ENCODE measurements at regions of chr7 and their contacts with region 1.

Region 1: GRCh38 chr7:87716819-87717218 is 88.6 kb downstream of the RUNDC3B start:
- DNase-seq: no peak
- H3K4me3 ChIP-seq: no peak overlapping the region
- H3K27ac ChIP-seq: no peak overlapping the region
- H3K4me1 ChIP-seq: no peaks in the 10 kb centered on the region
- H3K27me3 ChIP-seq: no peaks in the 10 kb centered on the region
- CTCF ChIP-seq: no peak
- EP300 ChIP-seq: no peak
- POLR2A ChIP-seq: no peak

Region 2: DNA sequence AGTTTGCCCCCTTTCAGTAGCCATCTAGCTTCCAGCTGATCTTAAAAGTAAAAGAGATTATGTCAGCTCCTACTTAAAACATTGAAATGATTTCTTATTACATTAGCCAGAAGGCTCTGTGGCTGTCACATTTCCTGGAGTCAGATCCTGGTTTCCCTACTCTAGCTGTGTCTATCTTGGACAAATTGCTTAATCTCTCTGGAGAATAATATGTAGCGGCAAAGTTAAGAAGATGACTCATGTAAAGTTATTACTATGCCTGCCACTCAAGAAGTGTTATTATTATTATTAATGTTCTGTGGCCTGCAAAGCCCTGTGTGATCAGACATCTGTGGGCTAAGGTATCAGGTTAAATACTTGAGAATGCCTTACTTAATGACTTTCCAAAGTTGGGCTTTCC is 18.6 kb after region 1 on chr7:
- in situ Hi-C with region 1: no loop called
- intact Hi-C with region 1: loop called (anchors 1 kb)
- DNase-seq: no peak
- H3K4me3 ChIP-seq: no peak overlapping the region
- H3K27ac ChIP-seq: no peak overlapping the region
- H3K4me1 ChIP-seq: no peaks in the 10 kb centered on the region
- H3K27me3 ChIP-seq: no peaks in the 10 kb centered on the region
- CTCF ChIP-seq: no peak
- EP300 ChIP-seq: no peak
- POLR2A ChIP-seq: no peak

Region 3: DNA sequence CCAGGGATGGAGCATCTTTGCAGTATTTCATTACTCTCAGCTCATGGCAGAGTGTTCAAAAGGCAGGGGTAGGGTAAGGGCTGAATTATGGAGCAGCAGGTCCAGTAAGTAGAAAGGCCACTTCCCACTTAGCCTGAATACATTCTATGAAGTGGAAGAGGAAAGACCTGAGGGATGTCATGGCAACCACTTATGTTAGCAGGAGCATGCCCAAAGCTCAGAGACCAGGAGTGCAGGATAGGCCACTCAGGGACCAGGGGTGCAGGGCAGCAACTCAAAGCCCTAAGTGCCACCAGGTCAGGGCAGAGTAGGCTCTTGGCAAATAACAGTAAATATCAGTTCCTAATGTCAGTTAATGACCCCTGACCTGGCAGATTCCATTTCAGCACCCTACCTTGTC is 499.5 kb after region 1 on chr7:
- in situ Hi-C with region 1: no loop called
- intact Hi-C with region 1: no loop called
- DNase-seq: no peak
- H3K4me3 ChIP-seq: no peak overlapping the region
- H3K27ac ChIP-seq: no peak overlapping the region
- H3K4me1 ChIP-seq: peaks cover 3 to 43% (median 23%) of the 10 kb centered on the region in 4 donors
- H3K27me3 ChIP-seq: no peaks in the 10 kb centered on the region
- CTCF ChIP-seq: no peak
- EP300 ChIP-seq: no peak
- POLR2A ChIP-seq: no peak

Region 4: GRCh38 chr7:88291398-88292173 is 574.8 kb after region 1 on chr7:
- in situ Hi-C with region 1: no loop called
- intact Hi-C with region 1: no loop called
- DNase-seq: no peak
- H3K4me3 ChIP-seq: no peak overlapping the region
- H3K27ac ChIP-seq: no peak overlapping the region
- H3K4me1 ChIP-seq: no peaks in the 10 kb centered on the region
- H3K27me3 ChIP-seq: no peaks in the 10 kb centered on the region
- CTCF ChIP-seq: no peak
- EP300 ChIP-seq: no peak
- POLR2A ChIP-seq: no peak

Measured in transverse colon (tissue), 4 donors.